Heart left ventricle (tissue), 16 donors: ENCODE measurements at regions of chr15 and their contacts with region 1.

Region 1: DNA sequence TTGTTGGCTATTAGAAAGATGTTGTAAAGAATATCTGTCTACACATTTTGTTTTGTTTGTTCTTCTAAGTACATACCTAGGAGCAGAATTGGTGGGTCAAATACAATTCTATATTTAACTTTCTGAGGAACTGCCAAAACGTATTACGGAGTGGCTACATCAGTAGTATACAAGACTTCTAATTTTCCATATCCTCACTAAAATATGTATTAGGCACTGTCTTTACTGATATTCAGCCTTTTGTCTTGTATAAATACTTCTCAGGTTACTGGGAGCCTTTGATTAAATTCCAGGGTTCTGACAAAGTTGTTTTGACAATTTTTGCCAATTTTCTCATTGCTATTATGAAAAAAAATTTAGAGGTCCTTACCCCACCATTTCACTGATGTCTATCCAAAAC is 146.7 kb downstream of the NR2E3 start:
- DNase-seq: no peak
- ATAC-seq: no peak
- H3K4me3 ChIP-seq: no peak overlapping the region
- H3K27ac ChIP-seq: no peak overlapping the region
- H3K4me1 ChIP-seq: peaks cover 0 to 6% (median 0%) of the 10 kb centered on the region in 12 donors
- H3K27me3 ChIP-seq: no peaks in the 10 kb centered on the region
- CTCF ChIP-seq: no peak
- POLR2A ChIP-seq: no peak

Region 2: GRCh38 chr15:71943806-71944205 is 13.2 kb before region 1 on chr15:
- intact Hi-C with region 1: loop called in 1 of 10 experiments (anchors 1 kb)
- DNase-seq: no peak
- ATAC-seq: no peak
- H3K4me3 ChIP-seq: no peak overlapping the region
- H3K27ac ChIP-seq: no peak overlapping the region
- H3K4me1 ChIP-seq: no peaks in the 10 kb centered on the region
- H3K27me3 ChIP-seq: no peaks in the 10 kb centered on the region
- CTCF ChIP-seq: no peak
- POLR2A ChIP-seq: no peak